ENCODE measurements at regions of chr5 and their contacts with region 1.

Region 1: GRCh38 chr5:52948418-52949076 is 40.6 kb upstream of the ITGA2 start:
- DNase-seq: no peak
- H3K4me3 ChIP-seq: no peak overlapping the region
- CTCF ChIP-seq: peak; percentile 64

Region 2: DNA sequence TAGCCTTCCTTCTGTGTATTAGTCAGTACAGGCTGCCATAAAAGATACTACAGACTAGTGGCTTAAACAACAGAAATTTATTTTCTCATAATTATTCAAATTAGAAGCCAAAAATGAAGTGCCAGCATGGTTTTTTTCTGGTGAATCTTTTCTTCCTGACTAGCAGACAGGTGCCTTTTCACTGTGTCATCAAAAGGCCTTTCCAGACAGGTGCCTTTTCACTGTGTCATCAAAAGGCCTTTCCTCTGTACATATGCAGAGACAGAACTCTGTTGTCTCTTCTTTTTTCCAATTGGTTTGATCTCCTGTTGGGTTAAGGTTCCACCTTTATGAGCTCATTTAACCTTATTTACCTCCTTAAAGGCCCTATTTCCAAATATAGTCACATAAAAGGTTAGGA is 965.4 kb before region 1 on chr5:
- CTCF ChIA-PET with region 1: no interaction called
- POLR2A ChIA-PET with region 1: no interaction called
- DNase-seq: no peak
- H3K4me3 ChIP-seq: no peak overlapping the region
- CTCF ChIP-seq: no peak

Region 3: DNA sequence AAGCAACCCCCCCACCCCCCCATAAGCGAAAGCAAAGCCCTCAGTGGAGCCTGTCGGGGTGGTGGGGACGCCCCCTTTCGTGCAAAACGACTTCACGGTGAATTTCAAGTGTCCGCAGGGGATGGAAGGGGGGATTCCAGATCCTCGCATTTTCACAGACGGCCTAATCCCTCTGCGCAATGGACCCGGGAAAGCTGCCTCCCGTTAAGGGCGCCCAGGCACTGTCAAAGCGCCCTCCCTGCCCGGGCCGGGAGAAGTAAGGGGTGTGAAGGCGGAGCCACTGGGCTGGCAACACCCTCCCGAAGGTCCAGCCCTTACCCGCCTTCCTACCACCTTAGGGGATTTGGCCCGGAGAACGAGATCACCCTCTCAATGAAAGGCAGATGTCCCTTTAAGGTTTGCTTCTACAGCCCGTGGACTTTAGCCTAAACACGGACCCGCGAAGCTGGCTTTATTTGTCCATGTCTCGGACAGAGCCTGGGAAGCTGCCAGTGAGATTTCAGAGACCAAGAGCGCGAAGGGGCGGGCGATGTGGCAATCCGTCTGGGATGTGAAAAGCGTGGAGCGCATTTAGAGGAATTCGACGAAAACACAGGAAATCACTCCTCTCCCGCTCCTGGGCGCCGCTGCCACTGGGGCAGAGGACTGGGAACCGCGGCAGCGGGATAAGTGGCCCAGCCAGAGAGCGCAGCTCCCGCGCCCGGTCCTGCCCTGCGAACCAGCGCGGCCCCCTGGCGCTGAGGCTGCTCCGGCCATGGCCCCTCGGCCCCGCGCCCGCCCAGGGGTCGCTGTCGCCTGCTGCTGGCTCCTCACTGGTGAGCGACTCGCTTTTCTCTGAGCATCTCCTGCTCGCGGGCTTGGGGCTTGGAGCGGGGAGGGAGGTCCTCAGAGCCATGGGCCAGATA is 160.7 kb before region 1 on chr5 and contains the starts of genes ITGA1 and PELO:
- CTCF ChIA-PET with region 1: no interaction called
- POLR2A ChIA-PET with region 1: no interaction called
- DNase-seq: no peak
- H3K4me3 ChIP-seq: peak within 1 kb of the TSS; percentile 77
- CTCF ChIP-seq: peak; percentile 57

Region 4: DNA sequence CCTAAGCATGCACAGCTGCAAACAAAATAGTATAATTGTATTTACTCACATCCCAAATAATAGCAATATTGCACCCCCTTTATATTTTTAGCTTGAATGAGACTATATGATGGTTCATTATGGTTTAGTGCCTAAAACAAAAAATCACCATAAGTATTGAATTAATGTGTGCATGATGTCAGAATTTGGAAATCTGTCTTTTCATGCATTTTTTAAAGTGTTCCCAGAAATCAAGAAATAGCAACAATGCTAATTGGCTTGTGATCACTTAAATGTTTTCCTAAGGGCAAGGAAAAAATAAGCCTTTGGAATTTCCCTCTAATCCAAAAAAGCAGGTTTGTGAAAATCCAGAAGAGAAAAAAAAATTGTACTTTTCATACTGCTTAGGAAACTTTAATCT is 10.3 kb before region 1 on chr5:
- CTCF ChIA-PET with region 1: interaction called, 33 read pairs
- POLR2A ChIA-PET with region 1: no interaction called
- DNase-seq: no peak
- H3K4me3 ChIP-seq: no peak overlapping the region
- CTCF ChIP-seq: no peak

Region 5: DNA sequence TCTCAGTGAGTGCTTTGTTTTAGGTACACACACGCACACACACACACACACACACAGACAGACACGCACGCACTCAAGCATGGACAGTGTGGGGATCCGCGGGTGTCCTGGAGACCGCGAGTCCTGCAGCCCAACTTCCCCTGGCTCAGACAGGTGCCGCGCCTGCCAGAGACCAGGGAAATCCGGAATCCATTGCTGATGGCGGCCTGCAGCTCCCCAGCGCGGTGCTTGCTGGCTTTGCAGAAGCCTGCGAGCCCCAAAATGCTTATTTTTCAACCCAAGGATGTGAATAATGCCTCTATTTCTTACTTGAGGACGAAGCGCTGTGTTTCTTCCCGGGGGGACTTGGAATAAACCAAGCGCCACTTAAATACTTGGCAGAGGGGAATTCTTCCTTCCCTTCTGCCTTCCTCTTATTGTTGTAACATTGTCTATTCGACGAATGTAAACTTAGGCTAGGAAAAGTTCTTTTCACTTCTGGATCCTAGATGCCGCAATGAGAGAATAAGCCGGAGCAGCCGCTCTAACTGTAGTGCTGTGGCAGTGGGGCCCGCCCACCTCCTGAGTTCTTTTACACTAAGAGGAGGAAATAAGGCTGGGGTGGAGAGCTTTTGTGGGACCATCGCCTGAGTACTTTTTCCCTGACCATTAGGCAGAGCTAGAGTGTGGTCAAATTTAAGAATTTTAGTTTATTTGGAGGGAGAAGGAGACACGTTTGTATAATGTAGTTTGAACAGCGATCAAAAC is 41.4 kb after region 1 on chr5:
- CTCF ChIA-PET with region 1: interaction called, 19 read pairs
- POLR2A ChIA-PET with region 1: interaction called, 4 read pairs
- DNase-seq: no peak
- H3K4me3 ChIP-seq: peak overlapping the region; percentile 76
- CTCF ChIP-seq: peak; percentile 30

Region 6: GRCh38 chr5:53071738-53072137 is 123.2 kb after region 1 on chr5:
- CTCF ChIA-PET with region 1: interaction called, 17 read pairs
- POLR2A ChIA-PET with region 1: no interaction called
- DNase-seq: no peak
- H3K4me3 ChIP-seq: no peak overlapping the region
- CTCF ChIP-seq: no peak

Region 7: DNA sequence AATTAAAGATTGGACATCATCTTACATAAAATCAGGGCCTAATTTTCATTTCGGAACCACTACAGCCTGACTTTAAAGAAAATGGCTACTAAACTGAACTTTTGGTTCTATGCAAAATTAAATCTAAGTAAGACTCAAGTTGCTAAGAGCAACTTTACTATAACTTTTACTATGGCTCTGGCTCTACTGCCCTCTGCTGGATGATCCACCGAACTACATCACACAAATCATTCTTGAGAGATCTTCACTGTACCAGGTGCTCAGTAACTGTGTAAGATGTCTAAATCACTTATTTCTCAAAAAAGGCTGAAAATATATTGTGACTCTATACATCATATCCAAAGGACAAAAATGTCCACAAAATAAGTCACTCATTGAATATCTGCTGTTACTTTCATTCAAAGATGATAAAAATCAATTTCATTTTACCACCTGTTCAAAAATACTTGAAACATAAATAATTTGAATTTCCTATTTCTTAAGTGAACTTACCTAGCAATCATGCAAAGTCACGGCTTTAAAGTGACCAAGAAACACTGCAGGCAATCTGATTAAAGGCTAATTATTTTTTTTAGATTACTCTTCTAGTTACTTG is 147.5 kb after region 1 on chr5:
- CTCF ChIA-PET with region 1: interaction called, 209 read pairs
- POLR2A ChIA-PET with region 1: no interaction called
- DNase-seq: no peak
- H3K4me3 ChIP-seq: no peak overlapping the region
- CTCF ChIP-seq: peak; percentile 65

Region 8: DNA sequence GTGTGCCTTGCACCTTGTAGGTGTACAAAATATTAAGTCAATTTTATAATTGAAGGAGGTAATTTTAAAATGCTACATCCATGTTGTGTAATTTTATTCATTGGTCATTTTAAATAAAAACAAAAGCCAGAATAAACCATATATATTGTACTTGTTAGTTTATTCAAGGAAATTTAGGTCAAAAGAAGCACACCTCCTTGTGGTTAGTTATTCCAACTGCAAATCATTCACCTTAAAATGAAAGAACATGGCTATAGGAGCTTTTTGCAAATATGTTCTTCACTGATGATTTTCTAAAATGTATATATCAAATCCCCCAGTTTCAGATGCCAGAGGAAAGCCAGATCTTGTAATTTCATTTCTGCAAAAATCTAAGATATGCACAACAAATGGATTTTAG is 166.4 kb after region 1 on chr5:
- CTCF ChIA-PET with region 1: interaction called, 59 read pairs
- POLR2A ChIA-PET with region 1: no interaction called
- DNase-seq: no peak
- H3K4me3 ChIP-seq: no peak overlapping the region
- CTCF ChIP-seq: peak; percentile 12